Activated CD4-positive, alpha-beta T cell treated with anti-CD3 and anti-CD28 coated beads, Interleukin-2, amount 10 ng/mL, durations not matched to agents 24 days and 14 days (primary cell): ENCODE measurements at regions of chr7 and their contacts with region 1.

Region 1: GRCh38 chr7:23357190-23358093 is 58.3 kb downstream of the MALSU1 start:
- DNase-seq: no peak
- H3K4me3 Mint-ChIP-seq: peak overlapping the region; percentile 57
- H3K27ac Mint-ChIP-seq: peak overlapping the region; percentile 80
- H3K4me1 Mint-ChIP-seq: peaks cover 25% of the 10 kb centered on the region
- H3K27me3 Mint-ChIP-seq: peaks cover 19% of the 10 kb centered on the region

Region 2: DNA sequence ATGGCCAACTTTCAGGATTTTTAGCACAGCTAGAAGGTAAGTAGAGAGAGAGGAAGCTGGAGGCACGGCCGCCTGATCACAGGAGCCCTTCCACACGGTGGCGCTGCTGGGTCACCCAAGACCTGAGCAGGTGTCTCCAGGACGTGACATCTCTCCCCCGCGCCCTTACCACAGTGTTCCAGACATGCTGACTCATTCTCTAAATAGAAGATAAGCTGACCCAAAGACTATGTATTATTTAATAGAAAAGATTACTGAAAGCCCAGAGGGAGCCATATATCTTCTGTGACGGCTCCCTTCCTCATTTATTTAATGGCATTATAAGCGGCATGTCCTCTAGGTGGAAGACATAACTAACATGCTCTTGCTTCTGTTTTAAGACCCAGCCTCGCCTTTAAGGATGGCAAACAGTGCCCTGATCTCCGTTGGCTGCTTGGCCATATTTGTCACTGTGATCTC is 84.3 kb before region 1 on chr7:
- intact Hi-C with region 1: loop called (anchors 2 kb)
- DNase-seq: peak; percentile 96
- H3K4me3 Mint-ChIP-seq: peak overlapping the region; percentile 57
- H3K27ac Mint-ChIP-seq: peak overlapping the region; percentile 69
- H3K4me1 Mint-ChIP-seq: peaks cover 18% of the 10 kb centered on the region
- H3K27me3 Mint-ChIP-seq: peaks cover 7% of the 10 kb centered on the region

Region 3: DNA sequence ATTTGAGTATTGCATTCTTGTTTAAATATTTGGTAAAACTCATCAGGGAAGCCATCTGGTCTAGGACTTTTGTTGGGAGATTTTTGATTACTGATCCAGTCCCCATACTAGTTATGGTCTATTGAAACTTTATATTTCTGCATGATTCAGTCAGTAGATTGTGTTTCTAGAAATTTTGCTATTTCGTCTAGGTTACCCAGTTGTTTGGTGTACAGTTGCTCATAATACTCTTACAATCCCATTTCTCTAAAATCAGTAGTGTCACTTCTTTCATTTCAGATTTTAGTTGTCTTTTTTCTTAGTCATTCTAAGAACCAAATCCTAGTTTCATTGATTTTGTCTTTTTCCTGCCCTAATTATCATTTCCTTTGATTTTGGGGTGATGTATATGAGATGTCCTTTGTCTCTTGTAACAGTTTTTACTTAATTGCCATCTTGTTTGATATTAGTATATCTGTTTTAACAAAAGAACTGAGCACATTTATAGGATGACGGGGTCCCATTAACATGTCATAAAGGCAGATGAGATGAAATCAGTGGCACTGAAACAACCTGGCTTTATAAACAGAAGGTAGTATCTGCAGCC is 50.4 kb before region 1 on chr7:
- intact Hi-C with region 1: loop called (anchors 1 kb)
- DNase-seq: no peak
- H3K4me3 Mint-ChIP-seq: no peak overlapping the region
- H3K27ac Mint-ChIP-seq: peak overlapping the region; percentile 11
- H3K4me1 Mint-ChIP-seq: peaks cover 36% of the 10 kb centered on the region
- H3K27me3 Mint-ChIP-seq: no peaks in the 10 kb centered on the region

Region 4: DNA sequence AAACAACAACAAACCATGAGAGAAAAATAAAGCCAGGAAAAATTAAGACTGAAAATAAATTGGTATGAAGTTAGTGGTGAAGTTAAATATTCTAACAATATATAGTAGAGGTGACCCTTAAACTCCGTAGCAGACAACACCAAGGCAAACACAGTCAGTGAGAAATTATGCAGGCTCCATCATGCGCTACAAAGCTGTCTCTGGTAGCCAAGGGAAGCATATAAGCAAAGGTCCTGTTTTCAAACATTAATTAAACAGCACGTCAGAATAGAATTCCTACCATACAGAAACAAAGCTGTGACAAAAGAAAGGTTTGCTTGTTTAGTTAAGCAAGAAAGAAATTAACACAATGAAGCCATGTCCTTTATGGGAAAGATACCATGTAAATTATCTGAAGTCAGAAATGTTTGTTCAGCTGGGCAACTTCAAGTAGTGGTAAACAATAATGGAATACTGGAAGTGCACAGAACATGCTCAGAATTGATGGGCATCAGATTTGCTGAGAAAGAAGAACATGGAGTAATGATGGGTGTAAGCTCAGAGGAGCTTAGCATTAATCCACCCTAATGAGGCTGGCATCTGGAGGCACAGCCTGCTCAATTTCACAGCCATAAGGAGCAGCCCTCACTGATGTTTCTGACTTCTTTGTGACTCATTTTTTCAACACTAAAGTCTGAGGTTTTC is 37.2 kb after region 1 on chr7:
- intact Hi-C with region 1: loop called (anchors 1 kb)
- DNase-seq: no peak
- H3K4me3 Mint-ChIP-seq: no peak overlapping the region
- H3K27ac Mint-ChIP-seq: no peak overlapping the region
- H3K4me1 Mint-ChIP-seq: peaks cover 12% of the 10 kb centered on the region
- H3K27me3 Mint-ChIP-seq: peaks cover 5% of the 10 kb centered on the region

Region 5: GRCh38 chr7:23462846-23463245 is 105.4 kb after region 1 on chr7:
- intact Hi-C with region 1: loop called (anchors 1 kb)
- DNase-seq: peak; percentile 67
- H3K4me3 Mint-ChIP-seq: no peak overlapping the region
- H3K27ac Mint-ChIP-seq: no peak overlapping the region
- H3K4me1 Mint-ChIP-seq: peaks cover 15% of the 10 kb centered on the region
- H3K27me3 Mint-ChIP-seq: peaks cover 67% of the 10 kb centered on the region

Region 6: GRCh38 chr7:23531794-23532489 is 174.5 kb after region 1 on chr7 and contains the start of gene TRA2A:
- intact Hi-C with region 1: loop called (anchors 1 kb)
- DNase-seq: peak; percentile 99
- H3K4me3 Mint-ChIP-seq: peak within 1 kb of the TSS; percentile 97
- H3K27ac Mint-ChIP-seq: peak within 1 kb of the TSS; percentile 99
- H3K4me1 Mint-ChIP-seq: peaks cover 29% of the 10 kb centered on the region
- H3K27me3 Mint-ChIP-seq: no peaks in the 10 kb centered on the region
- total RNA-seq, gene TRA2A: 96.8 and 103 TPM in 2 replicates